ENCODE measurements at regions of chr2 and their contacts with region 1.

Region 1: GRCh38 chr2:165015052-165015642 is 59.8 kb upstream of the SLC38A11 start:
- DNase-seq: peak; percentile 79

Region 2: GRCh38 chr2:165203689-165204559 is 188.8 kb after region 1 on chr2 and contains the start of gene SCN3A:
- intact Hi-C with region 1: loop called (anchors 1 kb)
- DNase-seq: no peak
- total RNA-seq, gene SCN3A: 0.35 TPM

Measured in cardiac septum (tissue), 1 donor.